Activated CD4-positive, alpha-beta T cell treated with anti-CD3 and anti-CD28 coated beads for 36 hours (primary cell): ENCODE measurements at regions of chr10 and their contacts with region 1.

Region 1: GRCh38 chr10:60646966-60647796 is 131.1 kb upstream of the CDK1 start:
- DNase-seq: peak; percentile 59
- ATAC-seq: peak; percentile 54
- H3K4me3 Mint-ChIP-seq: no peak overlapping the region
- H3K27ac Mint-ChIP-seq: no peak overlapping the region
- H3K4me1 Mint-ChIP-seq: peaks cover 37% of the 10 kb centered on the region
- H3K27me3 Mint-ChIP-seq: no peaks in the 10 kb centered on the region

Region 2: GRCh38 chr10:58807629-58808022 is 1839.6 kb before region 1 on chr10:
- CTCF ChIA-PET with region 1: no interaction called
- POLR2A ChIA-PET with region 1: no interaction called
- intact Hi-C with region 1: no loop called
- DNase-seq: no peak
- ATAC-seq: no peak
- H3K4me3 Mint-ChIP-seq: no peak overlapping the region
- H3K27ac Mint-ChIP-seq: no peak overlapping the region
- H3K4me1 Mint-ChIP-seq: no peaks in the 10 kb centered on the region
- H3K27me3 Mint-ChIP-seq: no peaks in the 10 kb centered on the region

Region 3: GRCh38 chr10:59625721-59626522 is 1021.3 kb before region 1 on chr10:
- CTCF ChIA-PET with region 1: no interaction called
- POLR2A ChIA-PET with region 1: no interaction called
- intact Hi-C with region 1: loop called in 1 of 2 experiments (anchors 5 kb)
- DNase-seq: peak; percentile 59
- ATAC-seq: peak; percentile 82
- H3K4me3 Mint-ChIP-seq: no peak overlapping the region
- H3K27ac Mint-ChIP-seq: no peak overlapping the region
- H3K4me1 Mint-ChIP-seq: peaks cover 2% of the 10 kb centered on the region
- H3K27me3 Mint-ChIP-seq: no peaks in the 10 kb centered on the region

Region 4: GRCh38 chr10:60069311-60069710 is 577.9 kb before region 1 on chr10:
- CTCF ChIA-PET with region 1: no interaction called
- POLR2A ChIA-PET with region 1: no interaction called
- intact Hi-C with region 1: no loop called
- DNase-seq: no peak
- ATAC-seq: no peak
- H3K4me3 Mint-ChIP-seq: no peak overlapping the region
- H3K27ac Mint-ChIP-seq: no peak overlapping the region
- H3K4me1 Mint-ChIP-seq: no peaks in the 10 kb centered on the region
- H3K27me3 Mint-ChIP-seq: no peaks in the 10 kb centered on the region

Region 5: DNA sequence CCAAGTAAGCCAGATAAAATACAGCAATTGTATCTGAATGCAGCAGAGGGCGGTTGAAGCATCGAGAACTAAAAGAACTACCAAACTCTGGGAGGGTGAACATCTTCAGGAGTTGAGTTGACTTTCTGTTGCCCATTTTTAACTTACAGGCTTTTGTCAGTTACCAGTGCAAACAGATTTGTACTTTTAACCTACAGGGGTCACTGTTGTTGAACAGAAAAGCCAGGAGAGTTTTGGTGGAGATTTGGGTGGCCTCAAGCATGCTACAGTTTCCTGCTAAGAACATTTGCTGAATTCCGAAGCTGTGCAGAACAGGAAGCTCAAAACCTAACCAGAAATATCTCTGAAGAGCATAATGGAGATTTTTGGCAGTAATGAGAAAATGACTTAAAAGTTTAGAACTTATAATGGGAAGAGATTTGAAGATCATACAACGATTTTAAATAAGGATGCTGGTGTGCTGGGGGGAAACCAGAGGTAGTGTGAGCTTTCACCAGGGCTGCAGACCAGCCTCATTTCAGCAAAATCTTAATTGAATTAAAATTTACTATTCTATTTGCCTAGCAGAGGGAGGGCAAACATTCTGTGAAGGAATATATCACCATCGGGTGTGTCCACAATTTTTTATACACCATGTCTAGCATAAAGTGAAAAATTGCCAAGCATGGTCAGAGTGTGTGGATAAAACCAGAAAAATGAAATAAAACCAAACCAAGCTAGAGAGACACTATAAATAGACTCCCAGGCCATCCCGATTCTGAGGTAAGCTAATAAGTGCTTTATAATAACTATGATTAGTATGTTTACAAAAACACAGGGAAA is 532.2 kb before region 1 on chr10:
- CTCF ChIA-PET with region 1: interaction called, 6 read pairs
- POLR2A ChIA-PET with region 1: no interaction called
- intact Hi-C with region 1: loop called in 1 of 2 experiments (anchors 2 kb)
- DNase-seq: peak; percentile 16
- ATAC-seq: peak; percentile 60
- H3K4me3 Mint-ChIP-seq: no peak overlapping the region
- H3K27ac Mint-ChIP-seq: no peak overlapping the region
- H3K4me1 Mint-ChIP-seq: no peaks in the 10 kb centered on the region
- H3K27me3 Mint-ChIP-seq: no peaks in the 10 kb centered on the region

Region 6: DNA sequence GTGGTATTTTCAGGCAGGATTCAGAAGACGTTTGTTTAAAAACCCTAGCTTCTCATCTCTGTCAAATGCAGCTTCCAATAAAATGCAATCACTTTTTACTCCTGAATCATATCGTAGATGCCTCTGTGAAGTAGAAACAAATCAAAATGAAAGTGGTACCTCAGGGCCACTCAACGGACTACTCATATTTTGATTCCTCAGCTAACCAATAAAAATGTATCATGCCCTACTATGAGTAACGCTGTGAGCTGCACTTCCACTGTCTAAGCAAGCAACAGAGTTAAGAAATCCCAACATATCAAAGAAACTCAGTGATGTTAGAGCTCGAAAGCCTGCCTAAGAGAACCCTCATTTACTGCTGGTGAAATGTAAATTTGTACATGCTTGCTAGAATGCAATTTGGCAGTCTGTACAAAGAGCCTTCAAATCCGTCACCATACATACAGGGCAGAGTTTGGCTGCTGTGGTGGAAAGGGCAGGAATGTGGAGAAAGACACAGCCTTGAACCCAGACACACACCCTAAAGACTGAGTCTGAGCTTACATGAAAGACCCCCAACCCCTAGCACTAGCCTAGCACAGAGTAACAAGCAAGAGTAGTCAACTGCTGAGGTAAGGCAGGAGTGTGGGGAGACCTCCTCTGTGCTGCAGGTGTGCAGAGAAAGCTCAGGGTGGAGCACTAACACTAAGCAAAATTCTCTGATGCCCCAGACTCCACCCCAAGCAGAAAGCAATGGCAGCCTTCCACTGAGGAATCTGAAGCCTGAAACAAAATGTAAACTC is 409.0 kb before region 1 on chr10:
- CTCF ChIA-PET with region 1: interaction called, 3 read pairs
- POLR2A ChIA-PET with region 1: no interaction called
- intact Hi-C with region 1: loop called in 1 of 2 experiments (anchors 5 kb)
- DNase-seq: peak; percentile 54
- ATAC-seq: peak; percentile 96
- H3K4me3 Mint-ChIP-seq: peak overlapping the region; percentile 48
- H3K27ac Mint-ChIP-seq: peak overlapping the region; percentile 70
- H3K4me1 Mint-ChIP-seq: peaks cover 33% of the 10 kb centered on the region
- H3K27me3 Mint-ChIP-seq: no peaks in the 10 kb centered on the region

Region 7: DNA sequence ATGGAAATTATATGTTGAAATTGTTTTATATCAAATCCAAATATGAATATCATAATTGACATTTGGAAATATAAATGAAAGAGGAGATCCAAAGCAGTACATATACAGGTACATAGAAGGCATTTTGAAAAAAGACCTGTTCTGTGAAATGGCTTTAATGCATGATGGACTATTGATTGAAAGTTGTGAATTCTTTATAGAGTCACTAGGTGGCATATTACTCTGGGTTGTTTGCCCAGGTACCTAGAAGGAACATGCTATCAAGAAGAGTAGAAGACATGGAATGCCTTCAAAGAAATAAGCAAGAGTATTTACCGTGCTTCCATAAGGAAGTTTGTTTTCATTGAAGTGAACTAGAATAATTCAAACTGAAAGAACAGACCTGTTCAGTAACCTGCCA is 97.5 kb before region 1 on chr10:
- CTCF ChIA-PET with region 1: interaction called, 6 read pairs
- POLR2A ChIA-PET with region 1: no interaction called
- intact Hi-C with region 1: loop called (anchors 1 kb)
- DNase-seq: no peak
- ATAC-seq: peak; percentile 81
- H3K4me3 Mint-ChIP-seq: no peak overlapping the region
- H3K27ac Mint-ChIP-seq: no peak overlapping the region
- H3K4me1 Mint-ChIP-seq: peaks cover 5% of the 10 kb centered on the region
- H3K27me3 Mint-ChIP-seq: no peaks in the 10 kb centered on the region

Region 8: GRCh38 chr10:60629332-60629731 is 17.8 kb before region 1 on chr10:
- CTCF ChIA-PET with region 1: interaction called, 37 read pairs
- POLR2A ChIA-PET with region 1: no interaction called
- intact Hi-C with region 1: no loop called
- DNase-seq: no peak
- ATAC-seq: no peak
- H3K4me3 Mint-ChIP-seq: no peak overlapping the region
- H3K27ac Mint-ChIP-seq: no peak overlapping the region
- H3K4me1 Mint-ChIP-seq: peaks cover 16% of the 10 kb centered on the region
- H3K27me3 Mint-ChIP-seq: no peaks in the 10 kb centered on the region

Region 9: GRCh38 chr10:60747817-60748469 is 100.8 kb after region 1 on chr10:
- CTCF ChIA-PET with region 1: no interaction called
- POLR2A ChIA-PET with region 1: no interaction called
- intact Hi-C with region 1: no loop called
- DNase-seq: no peak
- ATAC-seq: no peak
- H3K4me3 Mint-ChIP-seq: no peak overlapping the region
- H3K27ac Mint-ChIP-seq: no peak overlapping the region
- H3K4me1 Mint-ChIP-seq: no peaks in the 10 kb centered on the region
- H3K27me3 Mint-ChIP-seq: no peaks in the 10 kb centered on the region